ENCODE measurements at regions of chr2 and their contacts with region 1.

Region 1: DNA sequence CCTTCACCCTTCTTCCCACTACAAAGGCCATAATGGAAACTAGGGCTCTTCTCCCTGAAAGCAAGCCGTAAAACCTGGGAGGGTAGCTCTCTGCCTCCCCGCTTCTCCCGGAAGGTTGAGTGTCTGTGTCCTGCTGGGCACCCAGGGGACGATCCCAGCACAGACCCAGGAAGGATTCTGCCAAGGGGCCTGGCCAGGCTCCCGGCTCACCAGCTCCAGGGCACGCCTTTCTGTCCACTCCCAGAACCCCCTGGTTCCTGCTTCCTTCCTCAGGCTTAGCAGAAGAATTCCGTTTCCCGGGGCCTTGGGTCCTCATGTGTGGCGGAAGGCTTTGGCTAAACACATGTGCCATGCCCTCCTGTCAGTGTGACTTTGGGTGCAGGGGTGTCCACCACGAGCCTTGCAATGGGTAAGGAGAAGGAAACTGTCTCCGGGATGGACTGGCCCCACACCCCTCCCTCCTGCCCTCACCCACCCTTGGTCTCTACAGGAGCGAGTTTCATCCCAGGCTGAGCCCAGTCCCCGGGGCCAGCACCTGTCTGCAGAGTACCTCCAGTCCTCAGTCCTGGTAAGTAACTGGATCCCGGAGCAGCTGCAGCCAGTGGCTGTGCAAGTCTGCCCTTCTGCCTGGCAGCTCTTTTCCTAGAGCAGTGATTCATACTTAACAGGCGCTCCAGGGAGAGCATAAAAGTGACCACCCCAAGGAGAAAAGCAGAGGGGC is 135.8 kb downstream of the TPO start:
- DNase-seq: no peak
- H3K4me3 ChIP-seq: no peak overlapping the region
- H3K27ac ChIP-seq: no peak overlapping the region
- H3K4me1 ChIP-seq: peaks cover 24% of the 10 kb centered on the region
- H3K27me3 ChIP-seq: no peaks in the 10 kb centered on the region
- CTCF ChIP-seq: no peak
- POLR2A ChIP-seq: no peak

Region 2: DNA sequence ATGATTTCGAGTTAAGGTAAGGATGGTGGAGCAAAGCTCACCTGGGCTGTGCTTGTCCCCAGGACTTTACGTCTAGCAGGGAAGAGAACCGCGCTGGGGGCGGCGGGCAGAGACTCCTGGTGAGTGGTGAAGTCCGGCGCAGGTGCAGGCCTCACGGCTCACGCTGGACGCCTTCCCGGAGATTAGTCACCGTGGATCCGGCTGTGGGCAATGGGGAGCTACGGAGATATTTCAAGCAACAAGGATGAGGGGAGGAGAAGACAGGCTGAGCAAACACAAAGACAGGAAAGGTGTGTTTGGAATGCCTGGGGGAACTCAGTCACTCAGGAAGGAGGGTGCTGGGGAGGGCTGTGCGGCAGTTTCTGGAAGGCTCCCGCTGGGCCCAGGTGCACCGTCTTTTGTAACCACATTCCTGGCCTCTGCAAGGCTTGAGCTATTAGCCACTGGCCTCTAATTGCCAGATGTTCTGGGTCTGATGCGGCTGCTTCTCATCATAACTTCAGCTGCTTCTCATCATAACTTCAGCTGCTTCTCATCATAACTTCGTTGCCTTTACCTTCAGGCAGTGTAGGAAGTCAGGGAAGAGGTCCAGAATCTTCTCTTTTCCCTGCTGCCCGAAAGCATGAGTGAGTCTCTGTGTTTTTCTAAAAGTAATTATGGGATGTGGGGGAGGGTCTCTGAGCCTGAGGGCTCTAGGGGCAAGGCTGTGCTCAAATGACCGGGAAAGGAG is 76.3 kb after region 1 on chr2:
- intact Hi-C with region 1: loop called (anchors 2 kb)
- DNase-seq: no peak
- H3K4me3 ChIP-seq: no peak overlapping the region
- H3K27ac ChIP-seq: no peak overlapping the region
- H3K4me1 ChIP-seq: peaks cover 27% of the 10 kb centered on the region
- H3K27me3 ChIP-seq: no peaks in the 10 kb centered on the region
- CTCF ChIP-seq: no peak
- POLR2A ChIP-seq: no peak

Region 3: GRCh38 chr2:1675633-1676032 is 126.5 kb after region 1 on chr2:
- intact Hi-C with region 1: no loop called
- DNase-seq: peak; percentile 67 to 91
- H3K4me3 ChIP-seq: no peak overlapping the region
- H3K27ac ChIP-seq: peak overlapping the region; percentile 73
- H3K4me1 ChIP-seq: peaks cover 9% of the 10 kb centered on the region
- H3K27me3 ChIP-seq: no peaks in the 10 kb centered on the region
- CTCF ChIP-seq: peak in 1 of 3 experiments; percentile 36
- POLR2A ChIP-seq: no peak

Region 4: DNA sequence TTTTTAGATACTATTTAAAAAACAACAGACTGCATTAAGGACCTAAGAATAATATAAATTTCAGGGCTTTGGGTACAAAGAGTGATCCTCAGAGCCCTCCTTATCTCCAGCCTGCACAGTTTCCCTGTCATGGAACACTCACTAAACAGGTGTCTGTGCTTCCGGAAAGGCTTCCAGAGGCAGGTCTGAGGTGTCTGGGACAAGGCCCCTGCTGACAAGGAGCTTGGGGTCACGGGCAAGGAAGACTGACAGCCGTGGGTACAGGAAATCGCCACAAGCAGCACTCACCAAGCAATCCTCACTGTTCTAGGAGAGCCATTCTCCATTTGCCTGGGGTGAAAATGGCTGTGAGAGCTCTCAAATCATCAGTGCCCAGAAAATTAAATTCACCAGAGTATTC is 415.5 kb after region 1 on chr2:
- intact Hi-C with region 1: no loop called
- DNase-seq: peak in 1 of 2 donors; percentile 52
- H3K4me3 ChIP-seq: no peak overlapping the region
- H3K27ac ChIP-seq: no peak overlapping the region
- H3K4me1 ChIP-seq: no peaks in the 10 kb centered on the region
- H3K27me3 ChIP-seq: no peaks in the 10 kb centered on the region
- CTCF ChIP-seq: no peak
- POLR2A ChIP-seq: no peak

Measured in vagina (tissue), 2 donors.